Caco-2 (cell line): ENCODE measurements at regions of chr15 and their contacts with region 1.

Region 1: DNA sequence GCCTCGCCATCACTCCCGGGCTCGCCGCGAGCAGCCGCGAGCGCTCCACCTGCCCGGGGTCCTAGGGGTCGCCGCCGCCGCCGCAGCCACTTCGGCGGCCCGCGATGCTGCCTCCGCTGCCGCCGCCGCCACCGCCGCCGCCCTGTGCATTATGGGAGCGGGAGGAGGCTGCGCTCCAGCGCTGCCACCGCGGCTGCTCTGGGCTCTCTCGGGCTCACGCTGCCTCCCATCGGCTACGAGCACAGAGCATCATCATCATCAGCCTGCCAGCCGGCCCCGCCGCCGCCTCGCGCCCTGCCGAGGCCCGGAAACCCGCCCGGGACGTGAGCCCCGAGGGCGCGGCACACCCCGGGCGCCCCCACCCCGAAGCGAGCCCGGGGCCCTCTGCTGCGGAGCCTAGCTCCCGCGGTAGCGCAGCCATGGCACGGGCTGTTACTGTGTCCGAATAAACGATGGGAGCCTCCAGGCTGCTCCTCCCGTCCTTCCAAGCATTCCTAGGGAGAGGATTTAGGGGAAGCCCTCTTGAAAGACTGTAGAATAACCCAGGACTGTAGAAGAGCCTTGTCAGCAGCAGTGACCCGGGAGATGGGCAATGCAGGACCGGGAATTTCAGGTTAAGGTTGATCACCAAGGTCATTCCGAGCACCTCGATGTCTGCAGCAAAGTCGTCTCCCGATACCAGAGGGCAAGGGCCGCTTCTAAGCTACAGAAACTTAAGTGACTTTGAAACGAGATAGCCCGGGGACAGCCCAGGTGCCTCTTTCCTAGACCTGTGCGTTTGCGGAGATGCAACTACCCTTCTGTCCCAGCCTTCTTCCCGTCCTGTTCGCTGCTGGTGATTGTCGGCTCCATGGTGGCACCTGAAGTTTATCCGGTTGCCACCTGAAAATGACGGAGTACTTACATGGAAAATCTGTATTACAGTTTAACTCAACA is 579 bp upstream of the MYO5A start:
- DNase-seq: peak; percentile 49 to 65
- H3K4me3 ChIP-seq: peak overlapping the region; percentile 56
- H3K4me3 Mint-ChIP-seq: peak overlapping the region; percentile 71
- H3K27ac Mint-ChIP-seq: no peak overlapping the region
- H3K4me1 ChIP-seq: peaks cover 6% of the 10 kb centered on the region; the same call in 1 of the 2 replicates
- H3K4me1 Mint-ChIP-seq: peaks cover 7% of the 10 kb centered on the region
- H3K27me3 ChIP-seq: no peaks in the 10 kb centered on the region
- H3K27me3 Mint-ChIP-seq: peaks cover 22% of the 10 kb centered on the region
- CTCF ChIP-seq: no peak

Region 2: DNA sequence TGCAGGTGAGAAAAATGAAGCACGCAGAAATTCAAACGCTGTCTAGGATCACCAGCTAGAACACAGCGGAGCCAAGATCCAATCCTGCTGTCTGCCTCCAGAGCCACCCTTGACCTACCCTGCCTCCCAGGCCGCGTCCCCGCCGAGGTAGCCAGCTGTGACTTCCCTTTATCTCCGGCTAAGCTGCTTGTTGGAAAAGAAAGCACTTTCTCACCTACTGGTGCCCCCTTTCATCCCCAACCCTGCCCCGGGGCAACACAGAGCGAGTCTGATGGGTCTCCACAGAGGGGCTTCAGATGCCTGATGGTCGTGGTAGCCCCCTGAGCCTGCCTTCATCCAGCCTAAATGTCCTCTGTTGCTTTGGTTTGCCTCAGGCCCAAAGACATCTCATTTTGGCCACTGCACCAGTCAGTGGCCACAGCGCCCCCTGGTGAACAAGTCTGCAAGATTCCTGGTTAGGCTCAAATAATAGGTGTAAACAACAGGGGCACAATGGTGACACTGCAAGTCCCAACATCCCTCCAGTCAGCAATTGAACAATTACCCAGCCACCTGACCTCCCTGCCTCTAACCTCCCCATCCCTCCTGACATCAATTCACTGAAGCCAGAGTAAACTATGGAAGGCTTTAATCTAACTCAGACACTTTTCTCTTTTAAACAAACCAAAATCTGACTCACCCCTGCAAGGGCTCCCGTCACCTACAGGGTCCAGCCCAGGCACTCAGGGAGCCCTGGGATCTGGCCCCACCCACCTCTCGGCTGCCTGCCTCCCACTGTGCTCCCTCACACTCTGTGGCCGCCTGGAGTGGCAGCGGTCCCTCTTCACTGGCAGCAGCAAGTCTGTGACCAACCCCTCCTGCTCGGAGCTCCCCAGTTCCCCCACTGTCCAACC is 389.4 kb before region 1 on chr15:
- CTCF ChIA-PET with region 1: no interaction called
- POLR2A ChIA-PET with region 1: no interaction called
- intact Hi-C with region 1: no loop called
- DNase-seq: peak; percentile 62 to 72
- H3K4me3 ChIP-seq: no peak overlapping the region
- H3K4me3 Mint-ChIP-seq: no peak overlapping the region
- H3K27ac Mint-ChIP-seq: no peak overlapping the region
- H3K4me1 ChIP-seq: peaks cover 8% of the 10 kb centered on the region
- H3K4me1 Mint-ChIP-seq: peaks cover 9% of the 10 kb centered on the region
- H3K27me3 ChIP-seq: no peaks in the 10 kb centered on the region
- H3K27me3 Mint-ChIP-seq: no peaks in the 10 kb centered on the region
- CTCF ChIP-seq: peak; percentile 77 to 86

Region 3: GRCh38 chr15:52568601-52569256 is 39.5 kb after region 1 on chr15 and contains the start of gene ARPP19:
- CTCF ChIA-PET with region 1: no interaction called
- POLR2A ChIA-PET with region 1: no interaction called
- intact Hi-C with region 1: loop called (anchors 1 kb)
- DNase-seq: peak; percentile 95 to 96
- H3K4me3 ChIP-seq: peak within 1 kb of the TSS; percentile 56
- H3K4me3 Mint-ChIP-seq: peak within 1 kb of the TSS; percentile 77
- H3K27ac Mint-ChIP-seq: peak within 1 kb of the TSS; percentile 85
- H3K4me1 ChIP-seq: no peaks in the 10 kb centered on the region; the same call in 1 of the 2 replicates
- H3K4me1 Mint-ChIP-seq: peaks cover 7% of the 10 kb centered on the region
- H3K27me3 ChIP-seq: no peaks in the 10 kb centered on the region
- H3K27me3 Mint-ChIP-seq: no peaks in the 10 kb centered on the region
- CTCF ChIP-seq: no peak
- total RNA-seq, gene ARPP19: 164 and 184 TPM in 2 replicates

Region 4: GRCh38 chr15:52615284-52615683 is 86.0 kb after region 1 on chr15:
- CTCF ChIA-PET with region 1: no interaction called
- POLR2A ChIA-PET with region 1: no interaction called
- intact Hi-C with region 1: loop called (anchors 5 kb)
- DNase-seq: peak in 1 of 2 experiments; percentile 43
- H3K4me3 ChIP-seq: no peak overlapping the region
- H3K4me3 Mint-ChIP-seq: peak overlapping the region; percentile 42
- H3K27ac Mint-ChIP-seq: peak overlapping the region; percentile 78
- H3K4me1 ChIP-seq: peaks cover 26% of the 10 kb centered on the region
- H3K4me1 Mint-ChIP-seq: peaks cover 16% of the 10 kb centered on the region
- H3K27me3 ChIP-seq: no peaks in the 10 kb centered on the region
- H3K27me3 Mint-ChIP-seq: no peaks in the 10 kb centered on the region
- CTCF ChIP-seq: no peak

Region 5: DNA sequence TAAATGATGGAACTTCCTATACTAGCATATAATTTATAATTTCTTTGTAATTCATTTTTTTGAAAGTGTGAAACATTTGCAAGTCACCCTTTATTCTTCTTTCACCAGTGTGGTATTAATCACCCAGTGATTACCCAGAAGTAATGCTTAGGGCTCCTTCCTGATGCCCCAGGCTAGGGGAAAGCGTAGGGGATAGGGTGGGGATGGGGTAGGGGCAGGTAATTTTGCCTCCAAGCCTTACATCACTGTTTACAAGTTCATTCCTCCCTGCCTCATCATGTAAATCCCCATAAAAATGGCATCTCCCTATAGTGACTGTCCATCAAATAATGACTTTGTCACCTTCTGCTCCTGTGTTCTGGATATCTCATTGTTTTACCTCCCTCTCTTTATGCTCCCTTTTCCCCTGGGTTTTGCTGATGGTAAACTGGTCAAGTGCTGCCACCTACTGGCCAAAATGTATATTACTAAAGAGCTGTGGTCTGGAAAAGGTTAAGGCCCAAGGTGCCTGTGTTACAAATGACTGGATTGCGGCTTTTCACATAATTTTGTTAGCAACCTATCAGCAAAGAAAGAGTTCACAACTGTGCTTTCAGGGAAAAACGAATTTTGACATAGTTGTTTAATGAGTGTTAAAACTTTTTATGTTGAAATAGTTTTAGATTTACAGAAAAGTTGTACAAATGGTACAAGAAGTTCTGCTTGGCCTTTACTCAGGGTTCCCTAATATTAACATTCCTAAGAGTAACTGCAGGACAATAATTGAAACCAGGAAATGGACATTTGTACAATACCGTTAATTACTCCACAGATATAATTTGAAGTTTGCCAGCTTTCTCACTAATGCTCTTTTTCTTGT is 206.2 kb after region 1 on chr15:
- CTCF ChIA-PET with region 1: no interaction called
- POLR2A ChIA-PET with region 1: no interaction called
- intact Hi-C with region 1: loop called (anchors 2 kb)
- DNase-seq: peak; percentile 62 to 83
- H3K4me3 ChIP-seq: no peak overlapping the region
- H3K4me3 Mint-ChIP-seq: no peak overlapping the region
- H3K27ac Mint-ChIP-seq: no peak overlapping the region
- H3K4me1 ChIP-seq: no peaks in the 10 kb centered on the region
- H3K4me1 Mint-ChIP-seq: peaks cover 4% of the 10 kb centered on the region
- H3K27me3 ChIP-seq: no peaks in the 10 kb centered on the region
- H3K27me3 Mint-ChIP-seq: peaks cover 14% of the 10 kb centered on the region
- CTCF ChIP-seq: peak; percentile 47 to 84